MCF 10A (cell line): ENCODE measurements at regions of chr2 and their contacts with region 1.

Region 1: DNA sequence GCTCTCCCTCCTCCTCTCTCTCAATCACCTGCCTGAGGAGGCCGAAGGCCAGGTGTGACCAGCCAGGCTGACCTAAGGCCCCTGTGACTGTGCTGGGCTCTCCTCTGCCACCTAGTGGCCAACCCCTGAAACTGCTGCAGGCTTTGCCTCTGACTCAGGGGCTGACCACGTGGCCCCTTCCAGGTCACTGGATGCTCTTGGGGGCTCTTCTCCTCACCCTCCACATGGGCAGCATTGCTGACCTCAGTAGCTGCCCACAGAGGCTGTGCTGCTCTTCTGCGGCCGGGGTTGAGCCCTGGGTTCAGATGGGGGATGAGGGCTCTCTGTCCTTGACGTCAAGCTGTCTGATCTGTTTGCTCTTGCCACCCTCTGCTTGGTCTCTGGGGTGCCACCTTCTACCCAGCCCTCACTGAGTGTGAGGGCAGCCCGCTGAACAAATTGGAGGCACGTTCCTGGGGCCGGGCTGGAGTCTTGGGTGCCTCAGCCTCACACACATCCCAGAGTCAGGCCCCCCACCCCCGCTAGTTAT is 122.7 kb downstream of the TWIST2 start:
- DNase-seq: peak; percentile 72
- H3K4me3 Mint-ChIP-seq: no peak overlapping the region
- H3K27ac Mint-ChIP-seq: no peak overlapping the region
- H3K4me1 Mint-ChIP-seq: peaks cover 29% of the 10 kb centered on the region
- H3K27me3 Mint-ChIP-seq: no peaks in the 10 kb centered on the region
- CTCF ChIP-seq: peak; percentile 98

Region 2: GRCh38 chr2:238352361-238352760 is 618.3 kb before region 1 on chr2:
- CTCF ChIA-PET with region 1: interaction called, 3 read pairs
- POLR2A ChIA-PET with region 1: no interaction called
- intact Hi-C with region 1: loop called (anchors 10 kb)
- DNase-seq: no peak
- H3K4me3 Mint-ChIP-seq: no peak overlapping the region
- H3K27ac Mint-ChIP-seq: no peak overlapping the region
- H3K4me1 Mint-ChIP-seq: peaks cover 4% of the 10 kb centered on the region
- H3K27me3 Mint-ChIP-seq: no peaks in the 10 kb centered on the region
- CTCF ChIP-seq: no peak

Region 3: DNA sequence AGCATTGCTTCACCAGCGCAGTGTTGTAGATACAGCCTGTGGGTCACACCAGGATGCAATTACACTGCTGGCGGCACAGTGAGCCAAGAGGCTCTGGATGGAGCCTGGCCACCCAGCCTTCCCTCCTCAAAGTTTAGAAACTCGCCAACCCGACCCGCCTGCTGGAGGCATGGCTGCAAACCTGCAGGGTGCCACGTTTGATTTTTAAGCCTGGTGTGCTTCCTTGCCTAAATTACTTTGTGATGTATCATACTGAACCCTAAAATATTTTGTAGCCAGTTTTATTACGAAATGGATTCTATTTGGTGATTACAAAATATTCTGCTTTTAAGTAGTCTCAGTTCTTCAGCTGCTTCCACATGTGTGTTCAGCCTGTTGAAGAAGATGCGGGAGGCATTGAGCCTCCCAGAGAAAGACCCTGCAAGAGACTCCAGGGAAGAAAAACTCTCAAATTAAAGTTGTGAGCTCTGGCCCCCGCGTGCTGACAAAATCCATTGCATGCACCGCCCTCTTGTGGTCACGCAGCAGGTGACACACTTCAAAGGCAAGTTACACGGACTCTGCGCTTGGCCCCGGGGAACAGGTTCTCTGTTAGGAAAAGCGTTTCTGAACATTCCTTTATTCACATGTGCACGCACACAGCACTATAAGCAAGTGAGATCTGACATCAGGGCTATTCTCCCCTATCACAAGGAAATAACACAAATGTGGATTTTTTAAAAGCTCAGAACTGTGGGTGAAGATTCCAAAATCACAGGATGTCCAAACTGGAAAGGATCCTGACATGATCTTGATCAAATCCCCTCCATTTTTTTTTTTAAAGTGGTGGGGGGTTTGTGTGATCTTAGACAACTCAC is 185.7 kb before region 1 on chr2:
- CTCF ChIA-PET with region 1: interaction called, 4 read pairs
- POLR2A ChIA-PET with region 1: interaction called, 3 read pairs
- intact Hi-C with region 1: loop called (anchors 1 kb)
- DNase-seq: peak; percentile 72
- H3K4me3 Mint-ChIP-seq: peak overlapping the region; percentile 14
- H3K27ac Mint-ChIP-seq: peak overlapping the region; percentile 80
- H3K4me1 Mint-ChIP-seq: peaks cover 17% of the 10 kb centered on the region
- H3K27me3 Mint-ChIP-seq: no peaks in the 10 kb centered on the region
- CTCF ChIP-seq: peak; percentile 86

Region 4: DNA sequence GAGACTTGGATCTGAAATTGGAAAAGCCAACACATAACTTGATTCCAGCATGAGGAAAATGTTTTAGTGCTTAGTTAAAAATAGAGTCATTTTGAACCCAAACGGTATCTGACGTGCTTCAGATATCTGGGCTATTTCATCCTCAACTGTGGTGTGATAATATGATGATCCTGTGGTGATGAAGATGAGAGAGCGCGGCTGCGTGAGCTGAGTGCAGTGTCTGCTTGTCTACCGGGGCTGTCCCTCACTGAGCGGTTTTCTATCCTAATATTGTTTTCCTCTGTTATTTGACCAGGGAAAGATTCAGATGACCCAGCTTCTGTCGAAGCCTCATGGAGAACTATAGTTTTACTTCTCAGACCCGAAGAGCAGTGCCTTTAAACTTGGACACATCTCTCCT is 116.9 kb before region 1 on chr2:
- CTCF ChIA-PET with region 1: interaction called, 4 read pairs
- POLR2A ChIA-PET with region 1: interaction called, 5 read pairs
- intact Hi-C with region 1: loop called (anchors 2 kb)
- DNase-seq: no peak
- H3K4me3 Mint-ChIP-seq: no peak overlapping the region
- H3K27ac Mint-ChIP-seq: no peak overlapping the region
- H3K4me1 Mint-ChIP-seq: peaks cover 13% of the 10 kb centered on the region
- H3K27me3 Mint-ChIP-seq: no peaks in the 10 kb centered on the region
- CTCF ChIP-seq: no peak

Region 5: GRCh38 chr2:239106314-239106908 is 135.8 kb after region 1 on chr2:
- CTCF ChIA-PET with region 1: no interaction called
- POLR2A ChIA-PET with region 1: no interaction called
- intact Hi-C with region 1: loop called (anchors 5 kb)
- DNase-seq: peak; percentile 63
- H3K4me3 Mint-ChIP-seq: no peak overlapping the region
- H3K27ac Mint-ChIP-seq: no peak overlapping the region
- H3K4me1 Mint-ChIP-seq: peaks cover 9% of the 10 kb centered on the region
- H3K27me3 Mint-ChIP-seq: no peaks in the 10 kb centered on the region
- CTCF ChIP-seq: peak; percentile 80

Region 6: GRCh38 chr2:239143858-239144718 is 173.5 kb after region 1 on chr2:
- CTCF ChIA-PET with region 1: no interaction called
- POLR2A ChIA-PET with region 1: no interaction called
- intact Hi-C with region 1: no loop called
- DNase-seq: peak; percentile 28
- H3K4me3 Mint-ChIP-seq: no peak overlapping the region
- H3K27ac Mint-ChIP-seq: no peak overlapping the region
- H3K4me1 Mint-ChIP-seq: no peaks in the 10 kb centered on the region
- H3K27me3 Mint-ChIP-seq: no peaks in the 10 kb centered on the region
- CTCF ChIP-seq: peak; percentile 49